PC-3 (cell line): ENCODE measurements at regions of chr2 and their contacts with region 1.

Region 1: GRCh38 chr2:37414470-37414949 is 70.1 kb downstream of the QPCT start:
- DNase-seq: peak; percentile 84
- ATAC-seq: peak; percentile 72
- H3K4me3 ChIP-seq: no peak overlapping the region
- H3K27ac ChIP-seq: no peak overlapping the region
- H3K4me1 ChIP-seq: peaks cover 16% of the 10 kb centered on the region
- H3K27me3 ChIP-seq: no peaks in the 10 kb centered on the region
- CTCF ChIP-seq: peak; percentile 94

Region 2: GRCh38 chr2:37472959-37473358 is 58.4 kb after region 1 on chr2:
- CTCF ChIA-PET with region 1: no interaction called
- POLR2A ChIA-PET with region 1: no interaction called
- intact Hi-C with region 1: loop called (anchors 1 kb)
- DNase-seq: peak; percentile 92
- ATAC-seq: peak; percentile 92
- H3K4me3 ChIP-seq: peak overlapping the region; percentile 17; the same call in 1 of the 2 replicates
- H3K27ac ChIP-seq: peak overlapping the region; percentile 82
- H3K4me1 ChIP-seq: peaks cover 35% of the 10 kb centered on the region
- H3K27me3 ChIP-seq: no peaks in the 10 kb centered on the region
- CTCF ChIP-seq: no peak

Region 3: DNA sequence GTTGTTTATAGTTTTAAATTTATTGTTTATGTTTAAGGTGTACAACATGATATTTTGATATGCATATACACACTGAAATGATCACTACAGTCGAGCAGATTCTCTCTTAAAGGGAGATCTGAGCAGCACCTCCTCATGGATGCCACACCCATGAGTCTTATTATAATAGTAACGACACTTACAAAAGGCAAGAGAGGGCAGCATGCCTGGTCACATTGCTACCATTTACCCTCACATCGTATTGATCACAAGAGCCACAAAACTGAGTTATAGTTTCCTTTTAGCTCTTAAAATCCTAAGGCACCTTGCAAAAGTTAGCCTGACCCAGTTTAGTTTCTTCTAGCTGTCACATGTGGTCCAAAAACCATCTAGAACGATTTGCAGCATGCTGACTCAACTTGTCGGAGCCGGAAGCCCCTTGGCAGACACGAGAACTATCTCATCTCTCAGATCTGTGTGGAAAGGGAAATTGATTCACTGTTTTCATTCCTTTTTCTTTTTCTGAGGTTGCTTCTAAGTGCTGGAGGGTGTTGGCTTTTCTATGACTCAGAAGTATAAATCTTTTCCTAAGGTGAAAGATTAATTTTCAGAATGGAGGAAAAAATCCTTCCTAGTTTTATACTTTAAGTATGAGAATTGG is 171.6 kb after region 1 on chr2:
- CTCF ChIA-PET with region 1: interaction called, 6 read pairs
- POLR2A ChIA-PET with region 1: no interaction called
- intact Hi-C with region 1: loop called (anchors 5 kb)
- DNase-seq: peak; percentile 95
- ATAC-seq: peak; percentile 64
- H3K4me3 ChIP-seq: peak overlapping the region; percentile 41; the same call in 1 of the 2 replicates
- H3K27ac ChIP-seq: peak overlapping the region; percentile 90
- H3K4me1 ChIP-seq: peaks cover 84% of the 10 kb centered on the region
- H3K27me3 ChIP-seq: no peaks in the 10 kb centered on the region
- CTCF ChIP-seq: no peak

Region 4: DNA sequence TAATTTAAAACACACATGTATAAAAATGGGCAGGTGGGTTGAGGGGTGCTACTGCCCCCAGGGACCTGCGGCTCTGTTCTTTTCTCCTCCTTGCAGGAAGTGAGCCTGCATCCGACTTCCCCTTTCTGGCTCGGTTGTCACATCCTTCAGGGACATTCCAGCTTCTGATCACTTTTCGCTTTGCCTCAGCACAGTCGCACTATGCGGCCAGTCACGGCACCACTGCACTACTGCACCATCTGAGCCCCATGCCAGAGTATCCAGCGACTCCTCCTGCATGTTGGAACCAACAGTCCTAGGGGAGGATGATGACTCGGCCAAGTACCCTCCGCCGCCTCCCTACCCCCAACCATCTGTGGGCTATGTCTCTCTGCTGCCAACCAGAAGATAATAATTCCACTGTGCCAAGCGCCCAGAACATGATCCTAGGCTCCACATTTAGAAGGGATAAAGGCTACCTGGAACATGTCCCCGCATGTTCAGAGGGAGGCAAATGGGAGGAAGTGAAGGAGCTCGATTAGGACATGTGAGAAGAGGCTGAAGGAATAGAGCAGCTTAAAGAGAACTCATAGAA is 239.4 kb after region 1 on chr2:
- CTCF ChIA-PET with region 1: no interaction called
- POLR2A ChIA-PET with region 1: interaction called, 10 read pairs
- intact Hi-C with region 1: loop called (anchors 10 kb)
- DNase-seq: no peak
- ATAC-seq: no peak
- H3K4me3 ChIP-seq: no peak overlapping the region
- H3K27ac ChIP-seq: no peak overlapping the region
- H3K4me1 ChIP-seq: peaks cover 14% of the 10 kb centered on the region
- H3K27me3 ChIP-seq: no peaks in the 10 kb centered on the region
- CTCF ChIP-seq: no peak

Region 5: DNA sequence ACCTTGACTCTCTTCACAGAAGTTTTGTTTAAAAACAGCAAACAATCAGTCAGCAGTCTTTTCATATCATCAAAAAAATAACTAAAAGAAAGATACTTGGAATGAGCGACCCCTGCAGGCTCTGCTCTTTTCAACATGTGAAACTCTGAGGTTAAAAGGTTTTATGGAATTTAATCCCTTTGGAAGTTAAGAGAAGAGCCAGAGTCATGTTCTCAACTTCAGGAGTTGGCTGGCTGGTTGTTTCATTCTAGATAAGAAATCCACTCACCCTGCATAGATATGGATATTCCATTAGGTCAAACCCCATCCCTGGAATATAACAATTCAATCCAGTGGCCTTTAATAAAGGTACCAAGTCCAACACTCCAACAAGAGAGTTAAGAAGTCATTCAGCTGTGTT is 395.0 kb after region 1 on chr2:
- CTCF ChIA-PET with region 1: interaction called, 6 read pairs
- POLR2A ChIA-PET with region 1: no interaction called
- intact Hi-C with region 1: loop called (anchors 1 kb)
- DNase-seq: peak; percentile 79
- ATAC-seq: peak; percentile 48
- H3K4me3 ChIP-seq: no peak overlapping the region
- H3K27ac ChIP-seq: no peak overlapping the region
- H3K4me1 ChIP-seq: peaks cover 5% of the 10 kb centered on the region
- H3K27me3 ChIP-seq: no peaks in the 10 kb centered on the region
- CTCF ChIP-seq: peak; percentile 84

Region 6: GRCh38 chr2:37877457-37878315 is 463.2 kb after region 1 on chr2:
- CTCF ChIA-PET with region 1: interaction called, 15 read pairs
- POLR2A ChIA-PET with region 1: interaction called, 4 read pairs
- intact Hi-C with region 1: loop called (anchors 1 kb)
- DNase-seq: peak; percentile 86
- ATAC-seq: peak; percentile 76
- H3K4me3 ChIP-seq: 0 out of 2 replicates have a peak overlapping the region, but pooled peaks have one; percentile 24
- H3K27ac ChIP-seq: no peak overlapping the region
- H3K4me1 ChIP-seq: no peaks in the 10 kb centered on the region
- H3K27me3 ChIP-seq: no peaks in the 10 kb centered on the region
- CTCF ChIP-seq: peak; percentile 86